Dendritic cell treated with granulocyte-macrophage colony-stimulating factor and Interleukin-4, amounts not matched to agents 40 ng/mL and 50 ng/mL, for 4 days (primary cell): ENCODE measurements at regions of chr18 and their contacts with region 1.

Region 1: DNA sequence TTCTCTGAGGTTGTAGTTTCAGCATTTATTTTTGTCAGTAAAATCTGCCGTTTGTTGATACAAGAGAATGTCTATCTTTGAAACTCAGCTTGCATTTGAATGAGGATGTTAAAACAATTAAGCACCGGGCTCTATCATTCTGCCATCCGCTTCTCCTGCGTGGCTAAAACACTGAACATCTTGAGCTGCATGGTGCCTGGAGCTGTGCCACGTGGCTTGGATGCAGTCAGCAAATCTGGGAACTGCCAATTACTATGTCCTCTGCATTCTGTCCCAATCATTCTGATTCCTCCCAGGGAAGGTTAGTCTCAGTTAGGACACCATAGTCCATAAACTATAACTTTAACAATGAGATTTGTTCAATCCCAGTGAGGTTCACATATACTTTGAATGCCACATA is 598.4 kb downstream of the FBXO15 start:
- H3K4me3 Mint-ChIP-seq: no peak overlapping the region
- H3K27ac Mint-ChIP-seq: no peak overlapping the region
- H3K4me1 Mint-ChIP-seq: no peaks in the 10 kb centered on the region
- H3K27me3 Mint-ChIP-seq: no peaks in the 10 kb centered on the region

Region 2: DNA sequence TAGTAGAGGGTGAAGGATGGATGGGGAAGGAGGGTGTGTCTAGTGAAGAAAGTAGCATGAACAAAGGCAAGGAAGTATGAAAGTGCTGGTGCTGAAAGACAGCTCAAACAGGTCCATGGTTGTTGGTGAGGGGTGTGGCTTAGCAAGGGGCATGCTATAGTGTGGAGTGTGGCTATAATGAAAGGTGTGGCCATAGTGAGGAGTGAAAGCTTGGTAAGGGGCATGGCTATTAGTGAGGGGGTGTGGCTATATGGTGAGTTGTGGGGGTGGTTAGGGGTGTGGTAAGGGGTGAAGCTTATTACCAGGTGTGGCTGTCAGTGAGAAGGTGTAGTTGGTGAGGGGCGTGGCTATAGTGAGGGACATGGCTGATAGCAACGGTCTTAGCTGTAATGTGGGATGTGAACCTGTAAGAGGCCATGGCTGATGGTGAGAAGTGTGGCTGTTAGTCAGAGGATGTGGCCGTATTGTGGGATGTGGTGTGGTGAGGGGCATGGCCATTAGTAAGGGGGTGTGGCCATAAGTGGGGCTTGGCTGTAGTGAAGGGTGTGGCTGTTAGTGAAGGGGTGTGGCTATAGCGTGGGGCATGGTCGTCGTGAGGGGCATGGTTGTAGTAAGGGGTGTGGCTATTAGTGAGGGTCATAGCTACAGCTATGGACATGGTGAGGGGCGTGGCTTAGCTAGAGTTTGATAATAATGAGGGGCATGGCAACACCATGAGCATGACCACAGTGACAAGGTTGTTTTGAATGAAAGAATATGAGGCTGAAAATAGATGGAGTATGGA is 48.8 kb after region 1 on chr18:
- intact Hi-C with region 1: loop called (anchors 10 kb)
- H3K4me3 Mint-ChIP-seq: no peak overlapping the region
- H3K27ac Mint-ChIP-seq: no peak overlapping the region
- H3K4me1 Mint-ChIP-seq: no peaks in the 10 kb centered on the region
- H3K27me3 Mint-ChIP-seq: no peaks in the 10 kb centered on the region

Region 3: DNA sequence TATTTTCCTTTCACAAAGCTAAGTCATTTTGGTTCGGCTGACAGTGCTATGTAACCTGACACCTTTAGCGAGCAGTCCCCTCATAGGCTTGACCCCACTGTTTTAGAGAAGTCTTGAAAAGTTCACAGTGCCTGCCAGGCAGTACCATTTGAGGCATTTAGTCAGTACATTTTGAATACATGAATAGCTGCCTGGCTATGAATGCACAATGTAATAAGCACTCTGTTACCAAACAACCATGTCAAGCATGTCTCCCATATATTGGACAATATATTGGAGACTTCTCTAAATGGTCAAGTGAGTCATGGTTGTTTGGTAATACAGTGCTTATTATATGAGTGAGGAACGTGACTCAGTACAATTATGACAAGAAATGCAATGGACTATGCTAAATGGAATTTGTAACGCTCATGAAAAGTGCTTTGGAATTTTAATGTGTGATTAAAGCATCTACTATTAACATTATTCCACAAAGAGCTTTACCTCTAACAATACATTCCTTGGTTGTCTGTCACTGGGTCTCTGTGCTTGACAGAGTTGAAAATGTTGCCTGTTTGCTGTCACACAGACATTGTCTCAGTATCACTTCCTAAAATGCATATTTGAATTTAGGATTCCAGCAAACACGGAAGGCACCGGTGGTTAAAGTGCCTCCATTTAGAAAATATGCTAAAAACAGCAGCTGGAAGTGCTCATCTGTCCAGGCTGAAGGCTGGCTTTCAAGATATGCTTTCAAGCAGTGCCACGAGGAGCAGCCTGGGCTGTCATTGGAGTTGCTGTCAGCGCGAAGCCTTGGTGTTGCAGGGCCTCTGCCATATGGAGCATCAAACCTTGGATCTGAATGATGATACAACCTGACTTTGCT is 139.8 kb after region 1 on chr18:
- intact Hi-C with region 1: no loop called
- H3K4me3 Mint-ChIP-seq: no peak overlapping the region
- H3K27ac Mint-ChIP-seq: no peak overlapping the region
- H3K4me1 Mint-ChIP-seq: no peaks in the 10 kb centered on the region
- H3K27me3 Mint-ChIP-seq: no peaks in the 10 kb centered on the region